Activated CD4-positive, alpha-beta T cell treated with anti-CD3 and anti-CD28 coated beads, Interleukin-2, amount 10 ng/mL, durations not matched to agents 24 days and 14 days (primary cell): ENCODE measurements at regions of chr3 and their contacts with region 1.

Region 1: DNA sequence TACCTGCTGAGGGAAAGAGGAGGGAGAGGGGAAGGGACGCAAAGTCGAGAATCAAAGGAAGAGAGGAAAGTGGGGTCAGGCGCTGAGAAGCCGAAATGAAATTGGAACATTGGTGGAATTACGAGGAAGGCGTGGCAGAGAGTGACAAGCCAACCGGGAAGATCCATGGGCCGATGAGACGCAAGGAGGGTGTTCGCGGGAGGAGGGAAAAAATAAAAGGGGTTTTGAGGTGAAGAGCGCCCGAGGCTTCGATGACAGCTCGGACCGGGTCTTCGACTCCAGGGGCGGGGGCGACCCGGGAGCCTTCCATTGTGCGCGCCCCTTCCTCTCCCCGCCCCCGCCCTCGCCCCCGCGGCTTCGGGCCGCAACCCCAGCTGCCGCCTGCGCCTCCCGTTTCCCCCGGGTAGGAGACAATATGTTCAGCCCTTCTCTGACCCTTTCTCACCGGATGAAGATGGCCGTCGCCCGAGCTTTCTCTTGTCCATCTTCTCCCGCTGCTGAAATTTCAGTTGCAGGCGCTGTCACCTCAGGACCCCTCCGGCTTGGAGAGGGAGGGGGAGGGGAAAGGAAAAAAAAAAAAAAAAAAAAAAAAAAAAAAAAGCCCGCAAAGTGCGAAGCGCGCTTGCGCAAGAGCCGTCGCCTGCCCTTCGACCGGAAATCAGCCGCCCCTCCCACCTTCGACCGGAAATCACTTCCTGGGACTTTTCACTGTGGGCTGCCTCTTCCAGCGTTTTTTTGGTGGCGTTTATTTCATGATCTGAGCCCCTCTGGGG is at the start of gene SENP7:
- DNase-seq: peak; percentile 94
- H3K4me3 Mint-ChIP-seq: peak within 1 kb of the TSS; percentile 99
- H3K27ac Mint-ChIP-seq: peak within 1 kb of the TSS; percentile 100
- H3K4me1 Mint-ChIP-seq: peaks cover 27% of the 10 kb centered on the region
- H3K27me3 Mint-ChIP-seq: peaks cover 3% of the 10 kb centered on the region
- total RNA-seq, gene SENP7: 8.1 and 9.5 TPM in 2 replicates

Region 2: DNA sequence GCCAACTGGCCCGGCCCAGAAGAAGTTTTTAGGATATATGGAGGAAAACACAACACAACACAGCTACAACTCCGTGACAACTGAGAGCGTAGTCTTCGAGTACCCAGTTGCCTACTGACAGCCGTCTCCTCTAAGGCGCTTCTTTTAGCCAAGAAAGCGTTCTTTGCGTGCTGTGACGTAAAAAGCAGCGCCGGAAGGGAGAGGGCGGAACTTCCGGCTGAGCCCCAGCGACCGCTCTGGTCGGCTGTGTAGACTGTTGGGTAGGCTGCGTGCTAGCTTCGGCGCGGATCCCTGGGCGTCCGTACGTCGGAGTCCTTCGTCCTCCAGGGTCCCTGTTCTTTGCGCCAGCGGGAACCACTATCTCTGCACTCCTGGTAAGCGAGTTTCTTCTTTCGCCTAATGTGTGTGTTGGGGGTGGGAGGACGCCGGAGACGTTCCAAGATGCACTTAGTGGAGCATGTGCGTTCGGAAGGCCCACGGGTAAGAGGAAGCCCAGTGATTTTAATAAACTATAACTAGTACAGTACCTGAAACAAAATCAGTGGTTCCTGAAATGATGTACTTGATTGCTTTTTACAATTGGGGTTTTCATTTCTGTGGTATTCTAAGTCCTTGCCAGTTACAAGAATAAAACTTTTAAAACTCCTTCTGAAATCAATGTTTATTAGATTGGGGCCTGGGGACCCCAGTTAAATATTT is 48.9 kb after region 1 on chr3 and contains the start of gene TRMT10C:
- intact Hi-C with region 1: loop called (anchors 1 kb)
- DNase-seq: peak; percentile 98
- H3K4me3 Mint-ChIP-seq: peak within 1 kb of the TSS; percentile 98
- H3K27ac Mint-ChIP-seq: peak within 1 kb of the TSS; percentile 99
- H3K4me1 Mint-ChIP-seq: peaks cover 30% of the 10 kb centered on the region
- H3K27me3 Mint-ChIP-seq: peaks cover 2% of the 10 kb centered on the region
- total RNA-seq, gene TRMT10C: 58.3 and 59.9 TPM in 2 replicates